ENCODE measurements at regions of chr21 and their contacts with region 1.

Region 1: DNA sequence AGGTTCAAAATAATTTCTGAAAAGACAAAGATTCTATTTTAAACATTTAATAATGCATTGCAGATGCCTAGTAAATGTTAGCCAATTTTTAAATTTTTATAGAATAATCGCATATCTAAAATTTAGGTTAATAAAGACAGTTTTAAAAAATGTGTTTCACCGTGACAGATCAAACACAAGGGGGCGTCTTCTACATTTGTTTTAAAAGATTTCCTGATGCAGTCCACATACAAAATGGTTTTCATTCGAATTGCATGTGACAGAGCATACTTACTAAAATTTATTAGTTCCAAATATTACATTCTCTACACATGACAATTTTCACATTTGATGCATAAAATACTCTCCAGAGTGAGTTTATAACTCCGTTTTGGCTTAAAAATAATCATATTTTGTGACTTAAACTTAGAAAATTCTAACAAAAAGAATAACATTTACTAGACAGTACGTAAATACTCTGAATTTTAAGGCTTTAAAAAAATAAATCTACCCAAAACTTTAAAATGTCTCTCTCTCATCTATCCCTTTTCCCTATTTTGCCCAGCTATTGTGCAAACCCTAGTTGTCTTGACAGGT is 75.5 kb downstream of the ADAMTS1 start:
- DNase-seq: no peak
- H3K4me3 ChIP-seq: no peak overlapping the region
- H3K27ac ChIP-seq: no peak overlapping the region
- H3K4me1 ChIP-seq: no peaks in the 10 kb centered on the region
- H3K27me3 ChIP-seq: peaks cover 1% of the 10 kb centered on the region
- CTCF ChIP-seq: peak; percentile 49 to 58

Region 2: GRCh38 chr21:26236281-26236680 is 533.4 kb before region 1 on chr21:
- CTCF ChIA-PET with region 1: no interaction called
- dilution Hi-C with region 1: no loop called
- in situ Hi-C with region 1: no loop called
- intact Hi-C with region 1: no loop called
- DNase-seq: peak; percentile 4
- H3K4me3 ChIP-seq: no peak overlapping the region
- H3K27ac ChIP-seq: no peak overlapping the region
- H3K4me1 ChIP-seq: no peaks in the 10 kb centered on the region
- H3K27me3 ChIP-seq: no peaks in the 10 kb centered on the region
- CTCF ChIP-seq: no peak

Region 3: DNA sequence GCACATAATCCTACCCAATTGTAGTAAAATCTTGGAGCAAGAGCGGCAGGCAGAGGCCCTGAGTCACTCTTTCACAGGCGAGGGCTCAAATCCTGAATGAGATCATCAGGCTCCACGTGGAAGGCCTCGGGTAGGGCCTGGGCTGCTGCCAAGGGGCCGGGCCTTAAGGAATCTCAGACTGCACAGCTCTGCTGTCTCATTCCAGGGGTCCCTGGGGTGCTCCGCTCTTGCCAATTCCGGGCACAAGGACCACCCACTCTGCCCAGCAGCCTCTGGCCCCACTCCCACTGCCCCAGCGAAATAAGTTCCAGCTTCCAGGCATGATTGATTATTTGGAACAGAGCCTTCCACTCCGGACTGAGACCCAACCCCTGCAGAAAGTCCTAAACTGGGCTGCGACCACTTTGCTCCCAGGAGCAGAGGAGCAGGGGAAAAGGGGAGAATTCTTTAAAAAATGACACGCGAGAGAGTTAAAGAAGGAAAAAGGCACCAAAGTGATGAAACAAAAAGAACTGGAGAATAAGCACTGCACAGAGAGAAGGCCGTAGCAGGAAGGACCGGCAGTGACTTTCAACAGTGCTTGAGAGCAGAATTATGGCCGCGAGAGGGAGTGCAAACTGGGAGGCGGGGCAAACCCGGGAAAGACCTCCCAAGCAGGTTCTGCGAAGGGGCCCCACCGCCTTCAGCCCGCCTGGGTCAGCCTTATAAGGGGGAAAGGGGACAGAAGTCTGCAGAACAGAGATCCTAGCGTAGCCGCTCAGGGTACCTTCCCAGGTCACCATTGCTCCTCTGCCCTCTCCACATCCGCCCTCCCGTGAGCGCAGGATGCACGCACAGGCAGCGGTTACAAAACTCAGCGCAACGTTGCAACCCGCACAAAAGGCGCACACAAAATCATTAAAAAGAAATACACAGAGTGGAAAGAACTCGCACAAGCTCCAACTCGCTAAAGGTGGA is 73.6 kb after region 1 on chr21:
- CTCF ChIA-PET with region 1: no interaction called
- dilution Hi-C with region 1: no loop called
- in situ Hi-C with region 1: no loop called
- intact Hi-C with region 1: loop called (anchors 1 kb)
- DNase-seq: peak; percentile 91
- H3K4me3 ChIP-seq: peak overlapping the region; percentile 70 to 85 (median 74)
- H3K27ac ChIP-seq: peak overlapping the region; percentile 80
- H3K4me1 ChIP-seq: peaks cover 27% of the 10 kb centered on the region
- H3K27me3 ChIP-seq: no peaks in the 10 kb centered on the region
- CTCF ChIP-seq: peak in 1 of 2 donors; percentile 29